ENCODE measurements at regions of chr10 and their contacts with region 1.

Region 1: DNA sequence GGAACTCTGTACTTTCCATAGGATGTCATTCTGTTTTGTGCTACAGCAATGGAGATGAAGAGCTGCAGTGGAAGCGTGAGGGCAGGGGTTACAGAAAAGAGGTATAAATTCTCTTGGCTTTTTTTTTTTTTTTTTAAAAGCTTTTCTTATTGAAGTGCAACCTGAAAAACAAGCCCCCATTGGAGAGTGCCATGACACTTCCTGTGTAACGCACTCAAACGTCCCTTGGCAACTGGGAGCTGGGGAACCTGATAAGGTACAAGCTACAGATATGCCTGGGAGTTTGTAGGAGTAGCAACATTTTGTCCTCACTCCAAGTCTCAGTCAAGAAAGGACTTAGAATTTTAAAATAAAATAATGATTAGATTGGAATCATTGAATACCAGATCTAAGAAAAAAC is 512.1 kb downstream of the RPS24 start:
- DNase-seq: peak in 1 of 2 experiments; percentile 20
- H3K4me3 ChIP-seq: no peak overlapping the region
- H3K27ac ChIP-seq: no peak overlapping the region
- H3K4me1 ChIP-seq: no peaks in the 10 kb centered on the region
- H3K27me3 ChIP-seq: peaks cover 14% of the 10 kb centered on the region; the same call in 1 of the 2 replicates
- CTCF ChIP-seq: no peak

Region 2: DNA sequence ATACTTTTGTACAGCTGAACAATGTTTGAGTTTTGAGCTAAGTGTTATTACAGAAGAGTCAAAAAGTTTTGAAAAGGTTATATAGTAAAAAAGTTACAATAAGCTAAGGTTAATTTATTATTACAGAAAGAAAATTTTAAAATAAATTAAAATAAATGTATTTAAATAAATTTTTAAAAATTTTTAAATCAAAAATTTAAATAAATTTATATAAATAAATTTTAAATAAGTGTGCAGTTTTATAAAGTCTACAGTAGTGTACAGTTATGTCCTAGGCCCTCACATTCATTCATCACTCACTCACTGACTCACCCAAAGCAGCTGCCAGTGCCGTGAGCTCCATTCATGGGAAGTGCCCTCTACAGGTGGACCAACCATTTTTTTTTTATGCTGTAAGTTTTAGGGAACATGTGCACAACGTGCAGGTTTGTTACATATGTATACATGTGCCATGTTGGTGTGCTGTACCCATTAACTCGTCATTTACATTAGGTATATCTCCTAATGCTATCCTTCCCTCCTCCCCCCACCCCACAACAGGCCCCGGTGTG is 60.1 kb after region 1 on chr10:
- CTCF ChIA-PET with region 1: no interaction called
- POLR2A ChIA-PET with region 1: interaction called, 21 read pairs
- intact Hi-C with region 1: no loop called
- DNase-seq: peak; percentile 19 to 56
- H3K4me3 ChIP-seq: no peak overlapping the region
- H3K27ac ChIP-seq: no peak overlapping the region
- H3K4me1 ChIP-seq: no peaks in the 10 kb centered on the region
- H3K27me3 ChIP-seq: no peaks in the 10 kb centered on the region
- CTCF ChIP-seq: peak; percentile 52; the same call in 1 of the 2 replicates

Measured in PC-9 (cell line).